Posterior vena cava (tissue), 2 donors: ENCODE measurements at regions of chr1 and their contacts with region 1.

Region 1: DNA sequence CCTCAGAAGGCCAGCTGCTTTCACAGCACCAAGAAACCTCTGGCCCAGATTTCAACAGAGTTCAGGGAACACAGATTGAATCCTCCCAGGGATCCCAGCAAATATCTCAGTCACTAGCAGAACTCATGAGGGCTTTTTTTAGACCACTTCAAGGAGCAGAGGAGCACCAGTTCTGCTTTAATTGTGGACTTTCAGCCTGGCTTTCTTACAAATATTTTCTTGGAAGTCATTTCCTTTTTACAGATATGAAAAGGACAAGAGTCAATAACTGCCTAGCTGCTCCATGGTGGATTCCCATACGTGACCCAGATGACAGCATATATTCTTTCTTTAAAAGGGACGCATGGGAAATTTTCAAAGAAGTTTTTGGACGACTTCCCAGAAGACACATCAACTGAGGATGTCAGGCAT is 6.4 kb upstream of the LRRC8B start:
- DNase-seq: no peak

Region 2: GRCh38 chr1:89499320-89499719 is 18.9 kb before region 1 on chr1:
- intact Hi-C with region 1: loop called in 1 of 2 experiments (anchors 1 kb)
- DNase-seq: no peak